Transverse colon (tissue), 4 donors: ENCODE measurements at regions of chr1 and their contacts with region 1.

Region 1: DNA sequence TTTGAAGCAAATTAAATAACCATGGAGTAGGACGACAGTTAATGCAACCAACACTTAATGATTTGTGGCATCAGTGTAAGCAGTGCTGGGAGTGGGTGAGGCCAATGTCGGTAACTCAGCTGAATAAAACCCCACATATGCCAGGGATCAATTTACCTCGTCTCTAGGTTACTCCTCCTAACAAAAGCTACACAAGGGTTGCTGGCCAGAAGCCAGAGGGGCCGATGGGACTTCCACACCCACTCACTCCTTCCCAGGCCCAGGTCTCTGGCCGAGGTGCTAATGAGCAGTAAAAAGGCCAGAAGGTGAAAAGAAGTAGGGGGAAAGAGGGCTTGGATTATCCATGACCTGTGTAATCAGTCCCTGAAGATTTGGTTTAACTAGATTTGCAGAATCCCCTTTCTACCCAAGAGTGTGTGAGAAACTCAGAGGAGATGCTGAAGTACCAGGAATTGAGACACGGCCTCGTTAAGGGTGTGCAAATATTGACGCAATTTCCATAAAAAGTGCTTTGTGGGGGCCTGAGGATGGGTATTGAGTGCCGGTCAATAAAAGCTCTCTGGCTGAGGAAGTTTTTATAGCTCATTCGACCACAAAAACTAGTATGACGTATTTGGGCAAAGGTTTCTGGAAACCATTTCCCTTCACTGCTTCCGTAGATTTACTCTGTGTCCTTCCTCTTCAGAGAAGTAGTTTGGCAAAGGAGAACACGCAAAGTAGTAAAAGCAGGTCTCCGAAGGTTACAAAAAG is 145.5 kb downstream of the TBX15 start:
- DNase-seq: no peak
- H3K4me3 ChIP-seq: no peak overlapping the region
- H3K27ac ChIP-seq: no peak overlapping the region
- H3K4me1 ChIP-seq: no peaks in the 10 kb centered on the region
- H3K27me3 ChIP-seq: no peaks in the 10 kb centered on the region
- CTCF ChIP-seq: no peak
- EP300 ChIP-seq: no peak
- POLR2A ChIP-seq: no peak

Region 2: DNA sequence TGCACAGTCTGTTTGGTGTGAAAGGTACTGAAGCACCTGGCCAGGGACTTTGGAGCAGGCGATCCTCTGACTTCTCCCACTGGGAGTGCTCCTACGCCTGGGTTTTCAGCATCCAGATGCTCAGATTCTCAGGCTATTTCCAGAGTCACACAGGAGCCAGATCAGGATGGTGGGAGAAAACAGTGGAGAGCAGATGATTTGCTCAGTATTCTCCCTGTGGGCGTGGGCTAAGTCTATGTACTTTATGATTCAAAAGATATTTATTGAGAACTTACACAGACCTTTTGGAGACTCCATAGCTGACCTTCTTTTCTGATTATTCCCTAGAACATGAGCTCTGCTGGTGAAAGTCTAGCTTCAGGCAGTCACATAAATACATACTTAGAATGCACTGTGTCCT is 1102.1 kb before region 1 on chr1:
- in situ Hi-C with region 1: no loop called
- intact Hi-C with region 1: loop called (anchors 10 kb)
- DNase-seq: no peak
- H3K4me3 ChIP-seq: no peak overlapping the region
- H3K27ac ChIP-seq: no peak overlapping the region
- H3K4me1 ChIP-seq: peaks cover 0 to 8% (median 3%) of the 10 kb centered on the region in 4 donors
- H3K27me3 ChIP-seq: no peaks in the 10 kb centered on the region
- CTCF ChIP-seq: no peak
- EP300 ChIP-seq: no peak
- POLR2A ChIP-seq: no peak

Region 3: GRCh38 chr1:119091618-119092017 is 249.0 kb after region 1 on chr1:
- in situ Hi-C with region 1: no loop called
- intact Hi-C with region 1: no loop called
- DNase-seq: no peak
- H3K4me3 ChIP-seq: no peak overlapping the region
- H3K27ac ChIP-seq: no peak overlapping the region
- H3K4me1 ChIP-seq: no peaks in the 10 kb centered on the region
- H3K27me3 ChIP-seq: no peaks in the 10 kb centered on the region
- CTCF ChIP-seq: no peak
- EP300 ChIP-seq: no peak
- POLR2A ChIP-seq: no peak